Calu3 (cell line): ENCODE measurements at regions of chr12 and their contacts with region 1.

Region 1: GRCh38 chr12:92987362-92987761 is 58.3 kb upstream of the EEA1 start:
- DNase-seq: peak; percentile 39
- H3K4me3 Mint-ChIP-seq: no peak overlapping the region
- H3K27ac Mint-ChIP-seq: peak overlapping the region; percentile 27
- H3K4me1 Mint-ChIP-seq: peaks cover 30% of the 10 kb centered on the region
- H3K27me3 Mint-ChIP-seq: no peaks in the 10 kb centered on the region
- CTCF ChIP-seq: peak; percentile 23

Region 2: DNA sequence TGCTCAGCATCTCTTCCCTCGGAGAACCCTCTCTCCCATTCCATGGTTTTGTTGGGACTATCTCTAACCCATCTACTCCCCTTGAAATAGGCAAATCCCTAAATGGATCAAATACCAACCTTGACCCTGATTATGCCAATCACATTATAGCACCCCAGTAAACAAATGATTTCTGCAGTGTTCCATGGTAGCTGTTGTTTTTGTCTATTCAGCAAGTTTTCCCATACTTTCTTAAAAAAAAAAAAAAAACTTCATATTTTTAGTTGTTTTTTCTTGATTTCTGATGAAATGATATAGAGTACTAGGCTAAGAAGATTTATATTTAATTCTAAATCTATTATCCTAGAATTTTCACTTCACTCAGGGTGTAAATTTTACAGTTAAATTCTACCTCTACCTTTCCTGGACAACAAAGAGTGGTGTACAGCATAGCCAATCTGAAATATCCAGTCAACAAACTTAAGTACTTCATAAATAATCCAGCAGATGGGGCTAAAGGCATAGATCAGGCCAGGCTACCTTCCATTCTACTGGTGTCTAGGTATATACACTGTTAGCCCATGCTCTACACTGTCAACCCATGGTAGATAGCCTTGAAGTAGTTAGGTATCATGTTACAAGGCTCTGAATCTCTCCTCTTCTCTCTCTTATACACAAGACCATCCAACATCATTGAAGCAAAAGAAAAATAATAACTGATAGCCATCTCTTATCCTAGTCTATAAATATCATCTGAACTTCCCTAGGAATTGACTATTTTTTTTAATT is 202.4 kb before region 1 on chr12:
- CTCF ChIA-PET with region 1: no interaction called
- intact Hi-C with region 1: loop called (anchors 1 kb)
- DNase-seq: peak; percentile 45
- H3K4me3 Mint-ChIP-seq: no peak overlapping the region
- H3K27ac Mint-ChIP-seq: no peak overlapping the region
- H3K4me1 Mint-ChIP-seq: peaks cover 15% of the 10 kb centered on the region
- H3K27me3 Mint-ChIP-seq: no peaks in the 10 kb centered on the region
- CTCF ChIP-seq: peak; percentile 66

Region 3: GRCh38 chr12:92973601-92974000 is 13.8 kb before region 1 on chr12:
- CTCF ChIA-PET with region 1: no interaction called
- intact Hi-C with region 1: no loop called
- DNase-seq: no peak
- H3K4me3 Mint-ChIP-seq: no peak overlapping the region
- H3K27ac Mint-ChIP-seq: no peak overlapping the region
- H3K4me1 Mint-ChIP-seq: peaks cover 19% of the 10 kb centered on the region
- H3K27me3 Mint-ChIP-seq: no peaks in the 10 kb centered on the region
- CTCF ChIP-seq: no peak

Region 4: GRCh38 chr12:93079976-93080375 is 92.6 kb after region 1 on chr12:
- CTCF ChIA-PET with region 1: no interaction called
- intact Hi-C with region 1: no loop called
- DNase-seq: no peak
- H3K4me3 Mint-ChIP-seq: no peak overlapping the region
- H3K27ac Mint-ChIP-seq: no peak overlapping the region
- H3K4me1 Mint-ChIP-seq: peaks cover 23% of the 10 kb centered on the region
- H3K27me3 Mint-ChIP-seq: no peaks in the 10 kb centered on the region
- CTCF ChIP-seq: no peak

Region 5: GRCh38 chr12:93089805-93090569 is 102.6 kb after region 1 on chr12:
- CTCF ChIA-PET with region 1: no interaction called
- intact Hi-C with region 1: loop called (anchors 1 kb)
- DNase-seq: peak; percentile 43
- H3K4me3 Mint-ChIP-seq: no peak overlapping the region
- H3K27ac Mint-ChIP-seq: peak overlapping the region; percentile 85
- H3K4me1 Mint-ChIP-seq: peaks cover 64% of the 10 kb centered on the region
- H3K27me3 Mint-ChIP-seq: no peaks in the 10 kb centered on the region
- CTCF ChIP-seq: no peak

Region 6: GRCh38 chr12:93311827-93312226 is 324.5 kb after region 1 on chr12:
- CTCF ChIA-PET with region 1: no interaction called
- intact Hi-C with region 1: loop called (anchors 5 kb)
- DNase-seq: no peak
- H3K4me3 Mint-ChIP-seq: no peak overlapping the region
- H3K27ac Mint-ChIP-seq: no peak overlapping the region
- H3K4me1 Mint-ChIP-seq: peaks cover 47% of the 10 kb centered on the region
- H3K27me3 Mint-ChIP-seq: no peaks in the 10 kb centered on the region
- CTCF ChIP-seq: no peak

Region 7: DNA sequence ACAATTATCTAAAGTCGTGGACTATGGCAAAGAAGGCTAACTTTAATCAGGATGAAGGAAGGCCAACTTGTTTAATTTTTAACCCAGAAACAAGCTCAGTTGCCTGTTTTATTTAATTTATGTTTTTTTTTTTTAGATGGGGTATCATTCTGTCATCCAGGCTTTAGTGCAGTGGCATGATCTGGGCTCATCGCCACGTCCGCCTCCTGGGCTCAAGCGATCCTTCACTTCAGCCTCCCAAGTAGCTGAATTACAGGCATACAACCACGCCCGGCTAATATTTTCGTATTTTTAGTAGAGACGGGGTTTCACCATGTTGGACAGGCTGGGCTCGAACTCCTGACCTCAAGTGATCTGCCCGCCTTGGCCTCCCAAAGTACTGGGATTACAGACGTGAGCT is 410.1 kb after region 1 on chr12:
- CTCF ChIA-PET with region 1: interaction called, 21 read pairs
- intact Hi-C with region 1: loop called (anchors 1 kb)
- DNase-seq: no peak
- H3K4me3 Mint-ChIP-seq: no peak overlapping the region
- H3K27ac Mint-ChIP-seq: no peak overlapping the region
- H3K4me1 Mint-ChIP-seq: no peaks in the 10 kb centered on the region
- H3K27me3 Mint-ChIP-seq: no peaks in the 10 kb centered on the region
- CTCF ChIP-seq: no peak